MCF 10A (cell line): ENCODE measurements at regions of chr13 and their contacts with region 1.

Region 1: GRCh38 chr13:80037505-80037888 is 303.4 kb downstream of the SPRY2 start:
- DNase-seq: peak; percentile 78
- H3K4me3 Mint-ChIP-seq: no peak overlapping the region
- H3K27ac Mint-ChIP-seq: peak overlapping the region; percentile 85
- H3K4me1 Mint-ChIP-seq: peaks cover 19% of the 10 kb centered on the region
- H3K27me3 Mint-ChIP-seq: no peaks in the 10 kb centered on the region
- CTCF ChIP-seq: no peak

Region 2: GRCh38 chr13:79936368-79937136 is 100.9 kb before region 1 on chr13:
- CTCF ChIA-PET with region 1: no interaction called
- POLR2A ChIA-PET with region 1: no interaction called
- intact Hi-C with region 1: loop called (anchors 2 kb)
- DNase-seq: peak; percentile 93
- H3K4me3 Mint-ChIP-seq: peak overlapping the region; percentile 37
- H3K27ac Mint-ChIP-seq: peak overlapping the region; percentile 99
- H3K4me1 Mint-ChIP-seq: peaks cover 27% of the 10 kb centered on the region
- H3K27me3 Mint-ChIP-seq: no peaks in the 10 kb centered on the region
- CTCF ChIP-seq: no peak

Region 3: GRCh38 chr13:79988573-79988972 is 48.9 kb before region 1 on chr13:
- CTCF ChIA-PET with region 1: no interaction called
- POLR2A ChIA-PET with region 1: no interaction called
- intact Hi-C with region 1: no loop called
- DNase-seq: no peak
- H3K4me3 Mint-ChIP-seq: no peak overlapping the region
- H3K27ac Mint-ChIP-seq: peak overlapping the region; percentile 20
- H3K4me1 Mint-ChIP-seq: peaks cover 46% of the 10 kb centered on the region
- H3K27me3 Mint-ChIP-seq: no peaks in the 10 kb centered on the region
- CTCF ChIP-seq: no peak

Region 4: GRCh38 chr13:80086304-80086721 is 48.8 kb after region 1 on chr13:
- CTCF ChIA-PET with region 1: interaction called, 3 read pairs
- POLR2A ChIA-PET with region 1: no interaction called
- intact Hi-C with region 1: loop called (anchors 2 kb)
- DNase-seq: peak; percentile 41
- H3K4me3 Mint-ChIP-seq: no peak overlapping the region
- H3K27ac Mint-ChIP-seq: peak overlapping the region; percentile 10
- H3K4me1 Mint-ChIP-seq: peaks cover 34% of the 10 kb centered on the region
- H3K27me3 Mint-ChIP-seq: no peaks in the 10 kb centered on the region
- CTCF ChIP-seq: no peak

Region 5: DNA sequence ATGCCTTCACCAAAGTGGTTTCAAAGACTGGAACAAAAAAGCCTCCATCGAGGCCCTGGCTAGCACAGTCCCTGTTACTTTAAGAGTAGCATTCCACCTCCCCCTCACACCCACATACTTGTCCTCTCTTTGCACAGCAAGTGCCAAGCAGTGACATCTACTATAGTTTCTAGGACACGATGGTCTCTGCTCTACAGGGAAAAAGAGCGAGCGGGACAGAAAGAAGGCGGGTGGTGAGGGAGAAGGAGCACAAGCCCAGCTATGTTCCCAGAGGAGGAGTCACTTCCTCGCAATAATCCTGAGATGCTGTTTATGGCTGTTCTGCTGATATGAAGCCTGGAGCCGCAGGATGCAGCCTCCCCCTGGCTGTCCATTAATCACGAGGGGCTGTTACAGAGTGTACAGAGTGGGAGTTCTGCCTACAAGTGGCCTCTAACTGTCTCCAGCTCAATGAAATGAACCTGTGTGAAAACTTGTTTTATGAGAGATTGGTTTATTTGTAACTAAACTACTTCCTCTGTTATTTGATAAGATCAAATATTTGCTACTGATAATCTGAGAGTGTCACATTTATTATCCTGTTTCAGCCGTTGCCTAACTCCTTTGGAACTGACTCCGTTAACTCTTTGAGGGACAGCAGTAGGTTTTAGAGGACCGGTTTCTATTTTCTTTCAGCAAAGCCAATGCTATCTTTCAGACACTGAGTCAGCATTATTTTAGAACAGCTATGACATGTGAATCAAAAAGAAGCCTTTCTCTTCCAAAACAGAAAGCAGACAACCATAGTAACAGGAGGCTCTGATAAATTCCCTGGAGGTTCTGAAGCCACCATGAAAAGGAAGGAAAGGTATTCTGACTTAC is 95.5 kb after region 1 on chr13:
- CTCF ChIA-PET with region 1: no interaction called
- POLR2A ChIA-PET with region 1: no interaction called
- intact Hi-C with region 1: loop called (anchors 5 kb)
- DNase-seq: peak; percentile 51
- H3K4me3 Mint-ChIP-seq: peak overlapping the region; percentile 71
- H3K27ac Mint-ChIP-seq: peak overlapping the region; percentile 88
- H3K4me1 Mint-ChIP-seq: peaks cover 23% of the 10 kb centered on the region
- H3K27me3 Mint-ChIP-seq: no peaks in the 10 kb centered on the region
- CTCF ChIP-seq: no peak

Region 6: DNA sequence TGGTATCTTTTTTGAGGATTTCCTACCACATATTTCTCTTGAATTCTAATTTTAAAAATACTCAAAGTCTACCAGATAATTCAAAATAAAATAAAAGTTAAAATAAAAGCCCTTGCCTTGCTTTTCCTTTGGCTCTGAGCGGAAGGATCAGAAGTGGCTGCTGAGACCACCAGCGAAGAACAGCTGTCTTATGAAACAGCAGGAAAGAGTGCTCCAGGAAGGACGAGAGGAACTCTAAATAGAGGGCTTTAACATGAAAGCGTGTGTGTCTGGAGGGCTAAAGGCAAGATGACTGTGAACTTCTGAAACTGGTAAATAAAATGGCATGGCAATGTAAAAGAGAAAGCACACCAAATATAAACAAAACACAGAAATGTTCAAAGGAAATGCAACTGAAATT is 825.0 kb after region 1 on chr13:
- CTCF ChIA-PET with region 1: no interaction called
- POLR2A ChIA-PET with region 1: no interaction called
- intact Hi-C with region 1: no loop called
- DNase-seq: no peak
- H3K4me3 Mint-ChIP-seq: no peak overlapping the region
- H3K27ac Mint-ChIP-seq: no peak overlapping the region
- H3K4me1 Mint-ChIP-seq: no peaks in the 10 kb centered on the region
- H3K27me3 Mint-ChIP-seq: no peaks in the 10 kb centered on the region
- CTCF ChIP-seq: no peak